MCF 10A (cell line): ENCODE measurements at regions of chr21 and their contacts with region 1.

Region 1: DNA sequence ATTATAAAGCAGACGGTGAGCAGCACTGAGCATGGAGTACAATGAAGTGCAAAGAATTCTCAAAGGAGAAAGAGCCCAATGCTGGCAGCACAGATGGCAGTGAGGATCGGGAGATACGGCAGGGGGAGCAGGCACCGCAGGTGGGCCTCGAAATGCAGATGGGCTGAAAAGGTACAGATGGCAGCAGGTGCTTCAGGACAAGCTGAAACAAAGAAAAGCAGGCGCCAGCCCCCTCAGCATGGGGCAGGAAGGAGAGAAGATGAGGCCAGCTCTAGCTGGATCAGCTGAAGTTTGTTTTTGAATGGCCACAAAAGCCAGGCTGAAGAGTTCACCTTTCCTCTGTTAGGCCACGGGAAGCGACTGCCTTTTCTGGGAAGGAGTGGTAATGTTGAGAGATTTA is 7.7 kb downstream of the CFAP298 start:
- DNase-seq: no peak
- H3K4me3 Mint-ChIP-seq: no peak overlapping the region
- H3K27ac Mint-ChIP-seq: no peak overlapping the region
- H3K4me1 Mint-ChIP-seq: no peaks in the 10 kb centered on the region
- H3K27me3 Mint-ChIP-seq: no peaks in the 10 kb centered on the region
- CTCF ChIP-seq: no peak

Region 2: DNA sequence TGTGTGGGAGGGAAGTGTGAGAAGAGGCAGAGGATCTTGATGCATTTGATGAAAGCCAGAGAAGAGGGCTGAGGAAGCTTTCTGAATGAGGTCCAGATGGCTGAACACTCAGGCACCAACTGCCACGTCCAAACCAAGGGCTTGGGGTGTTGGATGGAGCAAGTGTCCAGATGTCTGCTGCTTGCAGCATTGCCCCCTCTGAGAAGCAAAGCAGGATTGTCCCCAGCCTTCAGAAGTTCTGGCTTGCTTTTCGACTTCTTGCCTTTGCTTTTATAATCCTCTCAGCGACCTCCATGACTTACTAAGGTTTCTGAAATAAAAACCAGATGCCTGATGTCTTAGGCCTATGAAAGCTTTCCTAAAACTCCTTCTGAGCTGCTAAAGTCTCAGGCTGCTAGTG is 549.2 kb before region 1 on chr21:
- CTCF ChIA-PET with region 1: no interaction called
- POLR2A ChIA-PET with region 1: no interaction called
- intact Hi-C with region 1: no loop called
- DNase-seq: no peak
- H3K4me3 Mint-ChIP-seq: no peak overlapping the region
- H3K27ac Mint-ChIP-seq: no peak overlapping the region
- H3K4me1 Mint-ChIP-seq: no peaks in the 10 kb centered on the region
- H3K27me3 Mint-ChIP-seq: no peaks in the 10 kb centered on the region
- CTCF ChIP-seq: no peak

Region 3: DNA sequence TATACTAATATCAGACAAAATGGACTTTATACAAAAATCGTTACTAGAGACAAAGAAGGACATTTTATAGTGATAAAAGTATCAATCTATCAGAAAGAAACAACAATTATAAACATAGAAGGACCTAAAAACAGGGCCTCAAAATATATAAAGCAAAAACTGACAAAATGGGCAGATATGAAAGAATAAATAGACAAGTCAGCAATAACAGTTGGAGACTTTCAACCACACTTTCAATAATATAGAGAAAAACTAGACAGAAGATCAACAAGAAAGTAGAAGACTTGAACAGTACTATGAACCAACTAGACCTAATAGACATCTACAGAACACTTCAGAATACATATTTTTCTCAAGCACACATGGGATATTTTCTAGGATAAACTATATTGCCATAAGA is 378.0 kb before region 1 on chr21:
- CTCF ChIA-PET with region 1: no interaction called
- POLR2A ChIA-PET with region 1: no interaction called
- intact Hi-C with region 1: no loop called
- DNase-seq: no peak
- H3K4me3 Mint-ChIP-seq: no peak overlapping the region
- H3K27ac Mint-ChIP-seq: no peak overlapping the region
- H3K4me1 Mint-ChIP-seq: no peaks in the 10 kb centered on the region
- H3K27me3 Mint-ChIP-seq: peaks cover 57% of the 10 kb centered on the region
- CTCF ChIP-seq: no peak

Region 4: DNA sequence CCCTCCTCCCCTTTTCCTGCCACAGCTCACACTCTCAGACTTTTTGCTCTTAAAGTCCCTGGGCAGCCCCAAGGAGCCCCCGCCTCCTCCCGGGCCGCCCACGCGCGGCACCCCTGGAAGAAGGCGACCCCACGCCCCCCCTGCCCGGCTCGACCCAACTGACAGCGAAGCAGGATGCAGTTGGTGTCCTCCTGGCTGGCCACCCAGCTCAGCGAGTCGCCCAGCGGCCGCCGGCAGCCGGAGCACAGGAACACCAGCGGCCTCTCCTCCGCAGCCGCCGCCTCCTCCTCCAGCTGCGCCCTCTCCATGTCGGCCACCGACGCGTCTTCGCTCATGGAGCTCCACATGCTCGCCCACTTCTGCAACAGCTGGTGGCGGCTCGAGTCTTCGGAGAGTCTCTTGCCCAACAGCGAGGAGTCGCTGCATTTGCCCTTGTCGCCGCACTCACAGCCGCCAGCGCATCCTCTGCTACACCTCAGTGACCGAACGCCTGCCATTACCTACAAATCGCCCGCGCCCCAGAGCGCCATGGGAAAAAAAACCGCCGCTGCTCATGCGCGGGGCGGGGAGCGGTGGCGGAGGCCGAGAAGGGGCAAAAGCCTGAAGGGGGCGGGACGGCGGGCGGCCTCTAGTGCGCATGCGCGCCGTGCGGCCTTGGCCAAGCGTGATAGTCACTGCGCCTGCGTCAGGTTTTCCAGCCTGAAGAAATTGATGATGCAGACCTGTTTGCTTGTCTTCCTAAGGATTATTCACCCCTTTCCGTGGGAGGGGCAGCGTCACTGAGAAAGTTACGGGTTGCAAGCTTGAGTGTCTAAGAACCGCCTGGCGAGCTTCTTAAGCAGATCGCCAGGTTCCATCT is 325.7 kb before region 1 on chr21 and contains the start of gene MIS18A:
- CTCF ChIA-PET with region 1: no interaction called
- POLR2A ChIA-PET with region 1: interaction called, 3 read pairs
- intact Hi-C with region 1: loop called (anchors 5 kb)
- DNase-seq: peak; percentile 97
- H3K4me3 Mint-ChIP-seq: peak within 1 kb of the TSS; percentile 94
- H3K27ac Mint-ChIP-seq: peak within 1 kb of the TSS; percentile 82
- H3K4me1 Mint-ChIP-seq: peaks cover 20% of the 10 kb centered on the region
- H3K27me3 Mint-ChIP-seq: no peaks in the 10 kb centered on the region
- CTCF ChIP-seq: no peak
- total RNA-seq, gene MIS18A: 10.6 and 14.0 TPM in 2 replicates

Region 5: DNA sequence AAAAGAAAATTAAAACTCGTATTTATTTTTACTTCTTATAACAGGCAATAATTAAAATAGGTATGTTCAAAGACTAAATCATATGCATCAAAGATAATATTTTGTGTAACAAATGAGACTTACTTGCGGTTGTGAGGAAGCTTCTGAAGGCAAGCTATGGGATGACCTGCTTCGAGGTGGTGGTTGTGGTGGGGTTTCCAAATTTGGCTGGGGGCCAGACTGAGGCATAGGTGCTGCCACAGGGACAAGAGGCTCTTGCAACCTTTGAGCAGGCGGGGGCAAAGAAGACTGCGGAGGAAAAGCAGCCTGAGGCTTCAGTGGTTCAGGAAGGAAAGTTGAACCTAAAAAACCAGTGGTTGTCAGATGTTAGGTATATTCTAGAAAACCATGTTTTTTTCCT is 34.3 kb after region 1 on chr21:
- CTCF ChIA-PET with region 1: no interaction called
- POLR2A ChIA-PET with region 1: no interaction called
- intact Hi-C with region 1: no loop called
- DNase-seq: no peak
- H3K4me3 Mint-ChIP-seq: no peak overlapping the region
- H3K27ac Mint-ChIP-seq: no peak overlapping the region
- H3K4me1 Mint-ChIP-seq: no peaks in the 10 kb centered on the region
- H3K27me3 Mint-ChIP-seq: no peaks in the 10 kb centered on the region
- CTCF ChIP-seq: no peak